ENCODE measurements at regions of chr9 and their contacts with region 1.

Region 1: GRCh38 chr9:130107234-130107861 is 53.6 kb downstream of the GPR107 start:
- DNase-seq: peak; percentile 67 to 96 (median 90)

Region 2: GRCh38 chr9:130172161-130172857 is 65.0 kb after region 1 on chr9 and contains the start of gene NCS1:
- intact Hi-C with region 1: loop called (anchors 10 kb)
- DNase-seq: peak; percentile 71 to 97 (median 86)

Region 3: DNA sequence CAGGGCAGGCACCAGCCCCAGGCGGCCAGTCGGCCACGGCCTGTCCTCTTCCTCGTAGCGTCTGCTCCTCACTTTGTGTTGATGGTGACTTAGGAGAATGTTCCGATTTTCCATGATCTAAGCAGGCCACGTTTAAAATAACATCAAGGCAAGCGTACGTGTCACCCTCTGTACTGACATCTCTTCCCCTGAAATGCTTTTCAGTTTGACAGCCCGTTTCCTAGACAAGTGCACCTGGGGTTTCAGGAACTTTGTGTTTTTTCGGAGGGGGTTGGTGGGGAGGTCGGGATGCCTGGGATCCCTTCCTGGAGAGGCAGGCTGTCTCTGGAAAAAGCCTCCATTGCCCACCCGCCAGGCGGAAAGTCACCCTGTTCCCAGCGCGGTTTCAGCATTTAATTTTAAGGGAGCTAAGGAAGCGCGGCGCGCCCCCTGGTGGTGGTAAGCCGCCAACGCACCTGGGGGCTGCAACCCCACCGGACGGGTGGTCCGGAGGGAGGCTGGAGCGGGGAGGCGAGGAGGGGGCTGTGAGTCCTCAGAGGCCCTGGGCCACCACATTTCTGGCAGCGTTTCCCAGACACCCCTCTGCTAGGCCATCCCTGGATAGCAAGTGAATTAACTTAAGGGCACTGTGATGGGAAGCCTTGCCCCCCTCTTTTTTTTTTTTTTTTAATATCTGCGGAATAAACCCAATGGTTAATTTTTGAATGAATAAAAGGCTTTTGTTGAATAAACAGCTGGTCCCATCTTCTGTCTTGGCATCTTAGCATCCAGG is 128.7 kb after region 1 on chr9:
- intact Hi-C with region 1: loop called (anchors 1 kb)
- DNase-seq: peak; percentile 56 to 94 (median 72)

Region 4: GRCh38 chr9:130343445-130343918 is 236.1 kb after region 1 on chr9:
- intact Hi-C with region 1: loop called (anchors 1 kb)
- DNase-seq: peak in 6 of 10 donors; percentile 31 to 73 (median 42)